Endothelial cell of umbilical vein (primary cell): ENCODE measurements at regions of chr10 and their contacts with region 1.

Region 1: GRCh38 chr10:11270135-11270857 is 252.6 kb downstream of the CELF2 start:
- DNase-seq: peak; percentile 81
- H3K4me3 ChIP-seq: no peak overlapping the region
- H3K27ac ChIP-seq: no peak overlapping the region
- H3K4me1 ChIP-seq: no peaks in the 10 kb centered on the region
- H3K27me3 ChIP-seq: no peaks in the 10 kb centered on the region
- CTCF ChIP-seq: peak; percentile 96 to 98
- POLR2A ChIP-seq: no peak

Region 2: DNA sequence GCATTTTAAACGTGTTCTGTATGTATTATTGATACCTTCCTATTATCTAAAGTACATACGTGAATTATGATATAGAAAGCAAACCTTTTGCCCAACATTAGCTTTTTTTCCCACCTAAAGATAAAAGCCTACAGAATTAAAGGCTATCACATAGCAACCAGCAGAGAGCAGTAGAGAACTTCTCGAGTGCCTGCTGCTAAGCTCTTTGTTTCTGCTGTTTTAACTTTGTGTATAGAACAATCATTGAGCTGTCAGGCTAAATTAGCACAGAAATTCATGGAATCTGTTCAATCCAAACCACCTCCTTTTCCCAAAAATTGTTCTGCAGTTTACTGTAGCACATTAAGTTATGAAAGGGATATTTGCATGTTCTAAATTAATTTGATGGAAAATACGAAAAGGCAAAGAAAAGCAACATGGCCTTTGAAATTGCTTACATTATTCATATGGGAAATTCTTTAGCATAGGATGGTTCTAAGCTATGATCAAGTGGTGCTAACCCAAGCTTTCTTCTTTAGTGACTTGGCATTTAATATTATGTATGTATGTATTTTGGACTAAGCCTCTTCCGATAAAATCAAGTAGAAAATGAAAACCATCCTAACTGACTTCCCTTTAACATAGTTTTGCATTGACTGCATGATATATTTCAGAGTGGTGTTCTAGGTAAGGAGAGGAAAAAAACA is 1927.3 kb before region 1 on chr10:
- CTCF ChIA-PET with region 1: interaction called, 82 read pairs
- POLR2A ChIA-PET with region 1: no interaction called
- dilution Hi-C with region 1: no loop called
- intact Hi-C with region 1: loop called (anchors 1 kb)
- DNase-seq: peak; percentile 42
- H3K4me3 ChIP-seq: no peak overlapping the region
- H3K27ac ChIP-seq: no peak overlapping the region
- H3K4me1 ChIP-seq: no peaks in the 10 kb centered on the region
- H3K27me3 ChIP-seq: no peaks in the 10 kb centered on the region
- CTCF ChIP-seq: peak; percentile 48 to 59
- POLR2A ChIP-seq: no peak

Region 3: DNA sequence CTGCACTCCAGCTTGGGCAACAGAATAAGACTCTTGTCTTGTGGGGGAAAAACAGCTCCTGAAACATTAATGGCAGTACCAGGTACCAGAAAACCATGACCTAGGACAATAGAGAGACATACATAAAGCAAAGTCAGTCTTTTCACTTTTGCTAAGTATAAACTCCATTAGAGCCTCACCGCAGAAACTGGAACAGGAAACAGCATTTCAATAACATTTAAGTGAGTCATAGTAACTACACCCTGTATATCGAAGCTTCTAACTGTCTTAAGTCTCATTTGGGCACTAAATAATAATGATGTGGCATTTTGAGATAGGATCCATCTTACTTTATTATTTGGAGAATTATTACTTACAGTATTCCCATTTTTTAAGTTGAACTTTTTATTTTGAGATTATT is 770.5 kb before region 1 on chr10:
- CTCF ChIA-PET with region 1: no interaction called
- POLR2A ChIA-PET with region 1: no interaction called
- dilution Hi-C with region 1: no loop called
- intact Hi-C with region 1: loop called (anchors 10 kb)
- DNase-seq: peak; percentile 61
- H3K4me3 ChIP-seq: no peak overlapping the region
- H3K27ac ChIP-seq: no peak overlapping the region
- H3K4me1 ChIP-seq: peaks cover 4% of the 10 kb centered on the region
- H3K27me3 ChIP-seq: no peaks in the 10 kb centered on the region
- CTCF ChIP-seq: no peak
- POLR2A ChIP-seq: no peak

Region 4: DNA sequence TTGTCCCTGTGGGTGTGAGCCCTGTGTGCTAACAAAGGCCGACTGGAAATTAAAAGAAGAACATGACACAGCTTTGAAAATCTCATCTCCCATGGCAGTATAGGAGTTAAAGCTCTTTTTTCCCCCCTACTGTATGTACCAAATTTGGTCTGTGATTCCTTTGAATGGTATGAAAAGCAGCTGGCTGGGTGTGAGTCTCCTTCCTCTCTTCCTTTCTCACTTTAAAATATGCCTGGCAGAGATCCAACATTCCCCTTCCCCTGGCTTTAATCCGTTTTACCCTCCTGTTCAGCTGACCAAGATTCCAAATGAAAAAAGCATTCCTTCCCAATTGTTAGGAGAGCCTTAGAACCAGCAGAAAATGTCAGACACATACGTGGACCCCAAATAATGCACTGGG is 477.6 kb before region 1 on chr10:
- CTCF ChIA-PET with region 1: interaction called, 3 read pairs
- POLR2A ChIA-PET with region 1: no interaction called
- dilution Hi-C with region 1: no loop called
- intact Hi-C with region 1: loop called (anchors 10 kb)
- DNase-seq: peak; percentile 89
- H3K4me3 ChIP-seq: no peak overlapping the region
- H3K27ac ChIP-seq: peak overlapping the region; percentile 98
- H3K4me1 ChIP-seq: peaks cover 43% of the 10 kb centered on the region
- H3K27me3 ChIP-seq: no peaks in the 10 kb centered on the region
- CTCF ChIP-seq: no peak
- POLR2A ChIP-seq: peak; percentile 53

Region 5: GRCh38 chr10:10930979-10931743 is 339.1 kb before region 1 on chr10:
- CTCF ChIA-PET with region 1: no interaction called
- POLR2A ChIA-PET with region 1: no interaction called
- dilution Hi-C with region 1: no loop called
- intact Hi-C with region 1: loop called (anchors 1 kb)
- DNase-seq: no peak
- H3K4me3 ChIP-seq: no peak overlapping the region
- H3K27ac ChIP-seq: no peak overlapping the region
- H3K4me1 ChIP-seq: no peaks in the 10 kb centered on the region
- H3K27me3 ChIP-seq: no peaks in the 10 kb centered on the region
- CTCF ChIP-seq: no peak
- POLR2A ChIP-seq: no peak

Region 6: DNA sequence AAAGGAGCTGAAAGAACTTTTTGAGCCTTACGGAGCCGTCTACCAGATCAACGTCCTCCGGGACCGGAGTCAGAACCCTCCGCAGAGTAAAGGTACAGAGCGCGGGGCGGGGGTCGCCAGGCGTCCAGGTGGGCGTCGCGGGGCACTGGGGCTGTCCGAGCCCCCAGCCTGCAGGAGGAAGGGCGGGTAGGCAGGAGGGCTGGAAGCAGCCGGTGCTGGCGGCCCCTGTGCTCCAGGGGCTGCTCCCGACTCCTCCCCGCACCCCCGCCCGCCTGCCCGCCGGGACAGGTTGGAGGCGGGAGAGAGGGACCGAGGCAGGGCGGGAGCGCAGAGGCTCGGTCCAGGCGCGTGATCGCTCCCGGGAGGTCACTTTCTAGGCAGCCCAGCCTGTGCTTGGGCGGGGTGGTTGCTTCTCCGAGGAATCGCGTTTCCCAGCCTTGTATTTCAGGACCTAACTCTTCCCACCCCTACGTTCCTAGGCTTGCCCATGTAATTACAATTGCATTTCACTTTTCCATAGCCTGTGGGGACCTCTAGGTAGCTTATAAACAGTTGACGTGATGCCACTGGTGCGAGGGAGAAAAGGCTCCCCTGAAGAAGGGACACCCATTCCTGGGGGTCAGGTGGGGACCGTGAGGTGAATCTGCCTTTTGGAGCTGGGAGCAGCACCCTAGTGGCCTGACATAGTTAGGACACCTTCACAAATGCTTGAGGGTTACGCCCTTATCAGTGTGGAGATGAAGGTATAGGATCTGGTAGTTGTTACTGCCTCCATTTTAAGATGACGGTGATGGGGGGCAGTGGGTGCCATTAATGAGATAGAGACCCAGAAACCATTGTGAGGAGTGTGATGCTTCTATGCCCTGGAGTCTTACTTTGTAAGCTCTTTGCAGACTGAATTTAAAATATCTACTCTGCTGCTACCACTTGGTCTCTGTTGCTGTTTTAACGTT is 104.4 kb before region 1 on chr10:
- CTCF ChIA-PET with region 1: interaction called, 6 read pairs
- POLR2A ChIA-PET with region 1: no interaction called
- dilution Hi-C with region 1: no loop called
- intact Hi-C with region 1: loop called (anchors 5 kb)
- DNase-seq: peak; percentile 33
- H3K4me3 ChIP-seq: peak overlapping the region; percentile 46 to 77 (median 67)
- H3K27ac ChIP-seq: no peak overlapping the region
- H3K4me1 ChIP-seq: peaks cover 9% of the 10 kb centered on the region
- H3K27me3 ChIP-seq: no peaks in the 10 kb centered on the region
- CTCF ChIP-seq: peak; percentile 29 to 42
- POLR2A ChIP-seq: no peak

Region 7: GRCh38 chr10:11197266-11197712 is 73.0 kb before region 1 on chr10:
- CTCF ChIA-PET with region 1: no interaction called
- POLR2A ChIA-PET with region 1: no interaction called
- dilution Hi-C with region 1: no loop called
- intact Hi-C with region 1: no loop called
- DNase-seq: no peak
- H3K4me3 ChIP-seq: no peak overlapping the region
- H3K27ac ChIP-seq: no peak overlapping the region
- H3K4me1 ChIP-seq: no peaks in the 10 kb centered on the region
- H3K27me3 ChIP-seq: no peaks in the 10 kb centered on the region
- CTCF ChIP-seq: no peak
- POLR2A ChIP-seq: no peak

Region 8: DNA sequence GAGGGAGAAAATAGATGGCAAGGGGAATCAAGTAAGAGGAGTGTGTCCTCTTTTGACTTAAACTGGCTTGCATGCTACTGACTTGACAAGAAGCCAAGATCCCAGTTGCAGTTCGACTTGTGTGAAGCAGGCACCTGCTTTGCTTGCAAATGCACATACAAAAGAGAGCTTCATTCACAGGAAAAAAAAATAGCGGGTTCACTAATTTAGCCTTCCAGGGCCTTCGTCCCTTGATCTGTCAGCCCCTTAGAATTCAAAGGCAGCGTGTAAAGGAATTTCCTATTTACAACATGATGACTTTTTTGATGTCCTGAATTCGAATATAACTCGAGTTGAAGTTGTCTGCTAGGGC is 60.5 kb before region 1 on chr10:
- CTCF ChIA-PET with region 1: interaction called, 8 read pairs
- POLR2A ChIA-PET with region 1: no interaction called
- dilution Hi-C with region 1: no loop called
- intact Hi-C with region 1: loop called (anchors 2 kb)
- DNase-seq: peak; percentile 85
- H3K4me3 ChIP-seq: no peak overlapping the region
- H3K27ac ChIP-seq: peak overlapping the region; percentile 71
- H3K4me1 ChIP-seq: peaks cover 36% of the 10 kb centered on the region
- H3K27me3 ChIP-seq: no peaks in the 10 kb centered on the region
- CTCF ChIP-seq: no peak
- POLR2A ChIP-seq: no peak